Heart left ventricle (tissue), 16 donors: ENCODE measurements at regions of chr9 and their contacts with region 1.

Region 1: DNA sequence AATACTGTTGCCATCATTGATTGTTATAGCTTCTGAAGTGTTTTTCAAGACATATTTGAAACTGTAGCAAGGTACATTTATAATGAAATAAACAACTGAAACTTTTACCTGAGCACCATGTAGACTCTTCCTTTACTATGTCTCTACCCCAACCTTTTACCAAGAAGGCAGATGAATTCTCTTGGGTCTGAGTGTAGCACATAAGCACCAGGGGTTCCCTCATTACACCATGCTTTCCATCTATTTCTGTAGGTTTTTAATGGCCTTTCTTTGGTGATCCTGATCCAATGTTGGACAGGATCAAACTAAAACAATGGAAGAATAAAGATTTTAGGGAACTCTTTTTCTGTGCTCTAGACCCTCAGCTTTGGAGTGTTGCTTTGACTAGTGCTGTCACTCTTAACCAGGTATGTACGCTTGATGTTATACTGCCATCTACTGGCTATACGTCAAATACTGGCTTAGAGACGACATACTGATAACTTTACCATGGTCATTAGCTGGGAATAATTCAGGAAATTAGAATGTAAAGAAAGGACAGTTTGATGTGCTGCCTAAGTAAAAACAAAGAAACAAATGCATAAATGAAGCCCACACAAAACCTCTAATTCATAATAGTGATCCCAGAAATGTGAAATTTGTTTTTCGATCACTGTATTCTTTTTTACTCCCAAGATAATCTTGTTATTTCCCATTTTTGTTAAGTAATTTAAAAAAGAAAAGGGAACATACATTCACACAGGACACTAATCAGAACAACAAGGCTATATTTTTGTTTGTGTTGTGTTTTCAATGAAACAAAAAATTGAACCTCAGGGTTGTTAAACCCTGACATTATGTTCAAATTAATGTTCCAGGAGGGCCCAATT is 30.7 kb downstream of the IFNW1 start:
- DNase-seq: no peak
- ATAC-seq: peak in 3 of 4 donors; percentile 79 to 82 (median 80)
- H3K4me3 ChIP-seq: no peak overlapping the region
- H3K27ac ChIP-seq: no peak overlapping the region
- H3K4me1 ChIP-seq: no peaks in the 10 kb centered on the region
- H3K27me3 ChIP-seq: no peaks in the 10 kb centered on the region
- CTCF ChIP-seq: peak; percentile 73 to 90 (median 85)
- POLR2A ChIP-seq: no peak

Region 2: DNA sequence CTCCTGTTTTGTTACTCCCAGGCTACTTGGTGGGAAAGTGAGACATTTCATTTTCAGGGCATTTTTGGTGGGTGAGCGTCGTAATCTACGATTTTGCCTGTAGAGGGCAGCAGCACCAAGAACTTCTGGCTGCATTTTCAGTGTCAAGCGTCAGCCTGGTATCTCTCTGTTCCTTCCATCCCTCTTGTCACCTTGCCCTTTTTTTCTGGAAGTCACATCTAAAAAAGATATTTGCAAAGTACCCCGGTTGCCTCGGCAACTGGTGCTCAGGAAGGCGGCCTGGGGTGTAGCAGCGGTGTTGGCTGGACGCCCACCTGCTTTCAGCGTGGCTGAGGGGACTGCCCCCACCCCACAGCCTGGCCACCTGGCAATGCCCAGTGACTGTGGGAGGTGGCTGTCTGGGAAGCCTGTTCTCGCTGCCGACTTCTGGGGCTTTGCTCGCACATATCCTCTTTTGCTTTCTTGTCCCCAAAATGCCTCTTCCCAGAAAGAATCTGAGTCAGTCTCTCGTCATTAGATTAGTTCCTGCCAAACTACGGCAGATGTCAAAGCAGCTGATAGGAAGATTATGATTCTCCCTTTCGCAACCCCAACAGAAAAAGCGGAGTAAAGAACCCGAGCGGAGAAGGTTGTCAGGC is 1617.6 kb before region 1 on chr9:
- intact Hi-C with region 1: loop called in 3 of 10 experiments (anchors 5 to 10 kb)
- DNase-seq: peak; percentile 56 to 90 (median 86)
- ATAC-seq: peak; percentile 75 to 91 (median 90)
- H3K4me3 ChIP-seq: peak overlapping the region in 9 of 12 donors; percentile 19 to 50 (median 39)
- H3K27ac ChIP-seq: peak overlapping the region; percentile 3 to 79 (median 40)
- H3K4me1 ChIP-seq: peaks cover 0 to 16% (median 4%) of the 10 kb centered on the region in 12 donors
- H3K27me3 ChIP-seq: no peaks in the 10 kb centered on the region
- CTCF ChIP-seq: peak; percentile 57 to 85 (median 72)
- POLR2A ChIP-seq: no peak

Region 3: GRCh38 chr9:20356403-20357035 is 754.4 kb before region 1 on chr9:
- intact Hi-C with region 1: loop called in 4 of 10 experiments (anchors 5 to 10 kb)
- DNase-seq: peak; percentile 58 to 70 (median 68)
- ATAC-seq: peak; percentile 76 to 95 (median 94)
- H3K4me3 ChIP-seq: peak overlapping the region in 8 of 12 donors; percentile 1 to 32 (median 28)
- H3K27ac ChIP-seq: peak overlapping the region in 10 of 12 donors; percentile 20 to 58 (median 43)
- H3K4me1 ChIP-seq: peaks cover 0 to 25% (median 15%) of the 10 kb centered on the region in 12 donors
- H3K27me3 ChIP-seq: no peaks in the 10 kb centered on the region
- CTCF ChIP-seq: peak; percentile 56 to 82 (median 73)
- POLR2A ChIP-seq: no peak

Region 4: DNA sequence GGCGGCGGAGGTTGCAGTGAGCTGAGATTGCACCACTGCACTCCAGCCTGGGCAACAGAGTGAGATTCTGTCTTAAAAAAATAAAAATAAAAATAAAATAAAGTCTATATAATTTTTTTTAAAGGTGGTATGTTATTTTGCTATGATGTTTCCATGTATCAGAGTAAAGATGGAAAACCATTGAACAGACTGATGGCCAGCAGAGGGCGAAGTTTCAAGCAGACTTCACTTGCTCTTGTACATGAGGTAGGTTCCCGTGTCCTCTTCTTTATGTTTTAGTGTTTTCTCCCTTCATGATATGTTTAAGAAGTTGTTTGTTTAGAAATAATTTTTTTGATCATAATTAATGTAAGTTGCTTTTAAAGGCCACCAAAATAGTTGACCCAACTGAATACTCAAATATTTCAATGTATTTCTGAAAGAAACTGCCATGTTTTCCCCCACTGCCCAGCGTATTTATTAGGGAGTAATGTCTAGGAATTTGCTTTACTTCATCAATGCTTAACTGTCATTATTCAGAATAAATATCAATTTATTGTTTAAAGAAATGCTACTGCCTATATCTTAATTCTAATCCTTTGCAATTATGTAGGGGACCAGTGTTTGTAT is 225.9 kb before region 1 on chr9:
- intact Hi-C with region 1: loop called in 7 of 10 experiments (anchors 5 to 10 kb)
- DNase-seq: peak; percentile 26 to 49 (median 44)
- ATAC-seq: no peak
- H3K4me3 ChIP-seq: no peak overlapping the region
- H3K27ac ChIP-seq: no peak overlapping the region
- H3K4me1 ChIP-seq: no peaks in the 10 kb centered on the region
- H3K27me3 ChIP-seq: no peaks in the 10 kb centered on the region
- CTCF ChIP-seq: peak; percentile 52 to 74 (median 66)
- POLR2A ChIP-seq: no peak

Region 5: DNA sequence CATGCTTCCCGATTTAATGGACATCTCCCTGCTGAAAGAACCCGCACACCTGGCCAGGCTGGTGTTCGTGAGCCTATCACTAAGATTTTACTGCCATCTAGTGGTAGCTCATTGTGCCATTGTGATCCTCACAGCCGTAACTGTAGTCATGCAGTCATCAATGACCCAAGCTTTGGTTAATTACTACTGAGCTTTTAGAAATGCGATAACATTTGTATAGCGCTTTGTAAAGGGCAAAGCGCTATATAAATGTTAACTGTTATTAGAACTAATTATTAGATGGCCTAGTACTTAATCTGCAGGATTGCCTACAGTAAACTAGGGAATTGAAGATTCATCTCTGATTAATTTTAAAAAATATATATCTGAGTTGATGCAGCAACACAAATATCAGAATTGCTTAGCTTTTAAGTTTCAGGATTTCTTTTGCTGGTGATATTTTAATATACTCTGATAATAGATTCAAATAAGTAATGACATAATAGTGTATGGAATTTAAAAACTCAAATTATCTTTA is 169.7 kb before region 1 on chr9:
- intact Hi-C with region 1: loop called in 6 of 10 experiments (anchors 5 to 10 kb)
- DNase-seq: peak in 3 of 5 donors; percentile 30 to 37 (median 34)
- ATAC-seq: peak; percentile 82 to 93 (median 88)
- H3K4me3 ChIP-seq: no peak overlapping the region
- H3K27ac ChIP-seq: no peak overlapping the region
- H3K4me1 ChIP-seq: peaks cover 0 to 6% (median 0%) of the 10 kb centered on the region in 12 donors
- H3K27me3 ChIP-seq: no peaks in the 10 kb centered on the region
- CTCF ChIP-seq: peak; percentile 76 to 94 (median 86)
- POLR2A ChIP-seq: no peak

Region 6: DNA sequence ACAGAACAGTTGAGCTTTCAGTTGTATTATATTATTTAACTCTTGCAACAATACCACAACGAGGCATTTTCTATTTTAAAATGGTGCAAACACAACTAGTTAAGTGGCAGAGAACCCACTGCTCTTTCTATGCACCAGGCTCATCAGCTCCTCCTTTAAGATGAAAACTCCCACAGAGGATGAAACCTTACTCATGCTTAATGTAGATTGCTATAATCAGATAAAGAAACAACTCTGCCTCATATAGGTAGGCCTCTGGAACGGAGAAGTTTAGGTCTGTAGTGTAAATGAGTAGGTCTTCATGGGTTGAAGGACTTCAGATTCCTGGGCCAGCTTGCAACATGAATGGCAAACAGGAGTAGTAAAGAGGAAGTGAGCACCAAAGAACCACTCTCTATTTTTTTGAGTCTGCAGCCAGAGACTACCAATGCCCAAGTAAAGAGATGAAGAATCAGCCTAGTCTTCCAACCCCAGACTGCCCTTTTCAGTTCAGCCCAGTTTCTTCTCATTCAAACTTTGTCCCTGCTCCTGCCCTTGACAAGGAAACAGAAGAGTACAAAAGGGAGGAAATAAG is 113.4 kb before region 1 on chr9:
- intact Hi-C with region 1: loop called in 1 of 10 experiments (anchors 10 kb)
- DNase-seq: no peak
- ATAC-seq: no peak
- H3K4me3 ChIP-seq: no peak overlapping the region
- H3K27ac ChIP-seq: peak overlapping the region in 1 of 12 donors; percentile 3
- H3K4me1 ChIP-seq: no peaks in the 10 kb centered on the region
- H3K27me3 ChIP-seq: no peaks in the 10 kb centered on the region
- CTCF ChIP-seq: no peak
- POLR2A ChIP-seq: no peak

Region 7: DNA sequence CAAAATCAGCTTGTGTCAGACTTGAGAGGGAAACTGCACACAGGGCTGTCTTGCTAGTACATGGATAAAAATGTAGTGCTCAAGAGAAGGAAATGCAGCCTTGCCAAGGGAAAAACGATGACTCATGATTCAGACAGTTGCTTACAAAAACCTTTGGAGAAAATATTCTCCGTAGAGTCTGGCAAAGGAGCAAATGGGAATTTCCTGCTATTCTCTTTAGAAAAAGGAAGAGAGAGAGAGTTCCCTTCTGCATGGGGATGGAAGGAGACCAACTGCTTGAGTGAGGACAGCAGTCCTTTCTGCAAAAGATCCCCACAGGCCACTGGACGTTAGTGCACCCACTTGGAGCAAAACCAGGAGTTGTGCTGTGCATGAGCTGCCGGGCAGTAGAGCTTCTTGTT is 40.8 kb before region 1 on chr9:
- intact Hi-C with region 1: loop called in 1 of 10 experiments (anchors 5 kb)
- DNase-seq: peak; percentile 42 to 62 (median 49)
- ATAC-seq: peak; percentile 61 to 94 (median 92)
- H3K4me3 ChIP-seq: peak overlapping the region in 5 of 12 donors; percentile 7 to 28 (median 10)
- H3K27ac ChIP-seq: peak overlapping the region in 4 of 12 donors; percentile 14 to 36 (median 34)
- H3K4me1 ChIP-seq: peaks cover 0 to 19% (median 13%) of the 10 kb centered on the region in 12 donors
- H3K27me3 ChIP-seq: no peaks in the 10 kb centered on the region
- CTCF ChIP-seq: peak in 8 of 12 donors; percentile 10 to 45 (median 25)
- POLR2A ChIP-seq: no peak

Region 8: DNA sequence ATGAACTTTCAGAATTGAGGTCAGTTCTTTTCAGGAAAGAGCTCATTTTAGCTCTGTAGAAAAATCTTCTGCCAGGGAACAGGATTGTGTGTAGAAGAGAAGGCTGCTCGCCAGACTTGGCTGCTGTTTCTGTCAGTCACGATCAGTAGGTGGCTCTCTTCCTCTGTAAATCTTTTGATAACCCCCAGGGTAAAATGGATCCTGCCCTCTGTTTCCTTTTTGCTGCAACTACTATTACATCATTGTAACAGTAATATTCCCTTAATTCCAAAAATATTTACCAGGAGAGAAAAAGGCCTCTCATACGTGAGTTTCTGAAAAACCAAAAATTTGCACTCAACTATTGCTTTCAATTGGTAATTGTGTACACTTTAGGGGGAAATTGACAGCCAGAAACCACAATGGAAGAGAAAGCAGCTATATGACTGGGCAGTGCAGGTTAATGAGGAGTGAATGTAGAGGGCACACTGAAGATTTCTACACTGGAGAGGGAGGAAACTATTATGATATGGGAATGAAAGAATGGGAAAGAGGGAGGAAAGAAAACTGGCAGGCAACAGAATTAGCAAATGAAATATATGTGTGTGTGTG is 43.2 kb after region 1 on chr9:
- intact Hi-C with region 1: no loop called
- DNase-seq: no peak
- ATAC-seq: peak in 3 of 4 donors; percentile 41 to 59 (median 45)
- H3K4me3 ChIP-seq: no peak overlapping the region
- H3K27ac ChIP-seq: peak overlapping the region in 1 of 12 donors; percentile 18
- H3K4me1 ChIP-seq: peaks cover 0 to 14% (median 1%) of the 10 kb centered on the region in 12 donors
- H3K27me3 ChIP-seq: peaks cover 0 to 3% (median 0%) of the 10 kb centered on the region in 9 donors
- CTCF ChIP-seq: peak in 4 of 12 donors; percentile 21 to 40 (median 31)
- POLR2A ChIP-seq: no peak

Region 9: DNA sequence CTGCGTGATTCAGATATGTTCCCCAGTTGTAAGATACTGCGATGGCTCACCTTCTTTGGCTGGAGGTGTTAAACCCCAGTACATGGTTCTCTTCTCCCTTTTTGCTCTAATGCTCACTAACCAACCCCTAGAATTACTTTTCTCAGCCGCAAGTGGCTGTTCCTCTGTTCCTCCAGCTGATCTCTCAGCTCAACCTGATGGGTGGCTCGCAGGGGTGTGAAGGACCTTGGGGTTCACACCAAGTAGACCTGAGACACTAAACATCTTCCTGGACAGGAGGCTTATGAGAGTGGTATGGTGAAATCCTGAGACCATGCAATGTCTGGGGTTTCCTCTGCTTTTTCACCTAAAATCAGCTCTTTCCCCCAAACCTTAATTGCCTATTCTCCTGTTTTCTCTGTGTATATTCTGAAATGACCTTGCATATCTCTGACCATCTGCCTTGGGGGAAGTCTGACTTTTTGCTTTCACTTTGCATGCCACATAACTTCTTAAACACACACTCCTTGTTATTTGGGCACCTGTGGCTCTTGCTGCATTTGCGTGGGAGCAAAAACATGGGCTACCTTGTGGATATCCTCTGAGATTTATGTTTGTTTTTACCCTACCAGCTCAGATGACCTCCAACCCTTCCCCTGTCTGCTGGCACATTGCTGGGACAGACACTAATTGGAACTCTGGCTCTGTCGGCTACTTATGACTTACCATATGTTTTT is 144.8 kb after region 1 on chr9:
- intact Hi-C with region 1: no loop called
- DNase-seq: no peak
- ATAC-seq: no peak
- H3K4me3 ChIP-seq: no peak overlapping the region
- H3K27ac ChIP-seq: no peak overlapping the region
- H3K4me1 ChIP-seq: peaks cover 0 to 11% (median 2%) of the 10 kb centered on the region in 12 donors
- H3K27me3 ChIP-seq: peaks cover 0 to 3% (median 0%) of the 10 kb centered on the region in 9 donors
- CTCF ChIP-seq: no peak
- POLR2A ChIP-seq: no peak

Region 10: DNA sequence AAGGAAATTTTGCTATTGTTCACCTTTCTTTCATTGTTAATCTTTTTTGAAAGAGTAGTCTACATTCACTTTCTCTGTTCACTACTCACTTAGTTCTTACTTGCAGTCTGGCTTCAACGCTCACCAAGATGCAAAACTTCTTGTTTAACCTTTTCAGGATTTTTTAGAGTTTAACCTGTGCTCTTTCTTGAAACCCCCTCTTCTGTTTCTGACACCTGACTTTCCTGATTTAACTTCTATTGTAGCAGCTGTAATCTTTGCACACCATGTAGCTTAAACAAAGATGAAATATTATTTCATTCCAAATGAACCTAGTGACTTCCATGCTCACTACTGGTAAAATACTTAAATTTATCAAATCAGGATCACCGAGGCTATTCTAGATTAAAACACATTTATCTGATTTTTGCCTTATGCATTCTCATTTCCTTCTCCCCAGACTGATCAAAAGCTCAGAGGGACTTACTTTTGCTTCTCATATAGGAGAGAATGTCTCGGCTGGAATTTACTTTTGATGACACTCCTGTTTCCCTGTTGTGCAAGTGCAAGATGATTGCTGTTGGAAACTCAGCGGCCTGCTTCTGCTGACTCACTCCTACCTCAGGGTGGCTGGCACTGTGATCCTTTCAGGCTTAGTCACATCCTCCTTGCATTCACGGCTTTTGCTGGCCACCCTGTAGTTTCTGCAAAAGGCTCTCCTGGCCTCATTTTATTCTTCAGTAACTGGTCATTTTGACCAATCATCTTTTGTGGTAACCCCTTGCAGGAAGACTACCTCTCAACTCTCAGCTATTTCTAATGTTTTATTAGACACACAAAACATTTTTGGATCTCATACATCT is 480.5 kb after region 1 on chr9:
- intact Hi-C with region 1: no loop called
- DNase-seq: peak in 4 of 5 donors; percentile 19 to 50 (median 39)
- ATAC-seq: peak in 2 of 4 donors; percentile 81 to 85
- H3K4me3 ChIP-seq: no peak overlapping the region
- H3K27ac ChIP-seq: no peak overlapping the region
- H3K4me1 ChIP-seq: peaks cover 0 to 11% (median 0%) of the 10 kb centered on the region in 12 donors
- H3K27me3 ChIP-seq: peaks cover 0 to 5% (median 0%) of the 10 kb centered on the region in 9 donors
- CTCF ChIP-seq: no peak
- POLR2A ChIP-seq: no peak